CD4-positive, alpha-beta memory T cell (primary cell): ENCODE measurements at regions of chr2 and their contacts with region 1.

Region 1: GRCh38 chr2:147331790-147332419 is 512.9 kb upstream of the ACVR2A start:
- DNase-seq: peak; percentile 48 to 57 (median 54)
- H3K4me3 ChIP-seq: no peak overlapping the region
- H3K4me3 Mint-ChIP-seq: peak overlapping the region in 6 of 8 donors; percentile 6 to 66 (median 42)
- H3K27ac ChIP-seq: no peak overlapping the region
- H3K27ac Mint-ChIP-seq: peak overlapping the region in 5 of 7 donors; percentile 15 to 66 (median 42)
- H3K4me1 ChIP-seq: peaks cover 17% of the 10 kb centered on the region
- H3K4me1 Mint-ChIP-seq: peaks cover 10 to 39% (median 16%) of the 10 kb centered on the region in 4 donors
- H3K27me3 ChIP-seq: no peaks in the 10 kb centered on the region
- H3K27me3 Mint-ChIP-seq: no peaks in the 10 kb centered on the region

Region 2: GRCh38 chr2:147045113-147045512 is 286.8 kb before region 1 on chr2:
- CTCF ChIA-PET with region 1: interaction called, 14 read pairs
- POLR2A ChIA-PET with region 1: no interaction called
- intact Hi-C with region 1: loop called (anchors 1 kb)
- DNase-seq: peak; percentile 8 to 37 (median 33)
- H3K4me3 ChIP-seq: no peak overlapping the region
- H3K4me3 Mint-ChIP-seq: no peak overlapping the region
- H3K27ac ChIP-seq: no peak overlapping the region
- H3K27ac Mint-ChIP-seq: peak overlapping the region in 3 of 7 donors; percentile 4 to 85 (median 74)
- H3K4me1 ChIP-seq: no peaks in the 10 kb centered on the region
- H3K4me1 Mint-ChIP-seq: peaks cover 0 to 5% (median under 1%) of the 10 kb centered on the region in 4 donors
- H3K27me3 ChIP-seq: no peaks in the 10 kb centered on the region
- H3K27me3 Mint-ChIP-seq: no peaks in the 10 kb centered on the region

Region 3: DNA sequence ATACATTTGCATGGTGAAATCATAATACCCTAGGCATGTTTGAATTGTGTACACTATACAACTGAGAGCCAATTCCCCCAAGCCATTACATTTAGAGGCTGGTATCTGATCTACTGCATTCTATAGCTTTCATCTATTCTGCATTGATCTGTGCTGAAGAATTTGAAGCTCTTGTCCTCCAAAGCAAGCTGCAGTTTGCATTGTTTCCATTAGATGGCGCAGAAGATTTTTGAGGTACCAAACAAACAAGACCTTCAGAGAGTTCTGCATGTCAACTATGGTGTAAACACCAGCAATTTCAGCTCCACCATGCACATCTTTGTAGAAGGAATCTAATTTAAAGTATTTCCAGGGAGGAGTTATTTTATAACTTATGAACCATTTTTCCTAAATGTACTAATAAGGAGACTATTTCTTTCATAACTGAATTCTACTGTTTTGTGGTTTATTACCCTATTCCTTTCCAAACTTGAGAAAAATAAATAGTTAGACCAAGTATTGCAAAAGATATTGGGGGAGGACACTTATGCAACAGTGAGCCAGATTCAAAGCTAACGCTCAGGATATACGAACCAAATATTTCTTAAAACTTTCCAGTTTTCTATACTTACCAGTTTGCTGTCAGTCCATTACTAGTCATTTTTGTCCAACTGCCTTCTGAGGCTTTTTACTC is 248.9 kb before region 1 on chr2:
- CTCF ChIA-PET with region 1: interaction called, 57 read pairs
- POLR2A ChIA-PET with region 1: no interaction called
- intact Hi-C with region 1: loop called (anchors 1 kb)
- DNase-seq: peak; percentile 50 to 64 (median 57)
- H3K4me3 ChIP-seq: no peak overlapping the region
- H3K4me3 Mint-ChIP-seq: no peak overlapping the region
- H3K27ac ChIP-seq: no peak overlapping the region
- H3K27ac Mint-ChIP-seq: no peak overlapping the region
- H3K4me1 ChIP-seq: no peaks in the 10 kb centered on the region
- H3K4me1 Mint-ChIP-seq: peaks cover 0 to 4% (median under 1%) of the 10 kb centered on the region in 4 donors
- H3K27me3 ChIP-seq: no peaks in the 10 kb centered on the region
- H3K27me3 Mint-ChIP-seq: no peaks in the 10 kb centered on the region

Region 4: GRCh38 chr2:147288131-147288530 is 43.8 kb before region 1 on chr2:
- CTCF ChIA-PET with region 1: interaction called, 49 read pairs
- POLR2A ChIA-PET with region 1: interaction called, 4 read pairs
- intact Hi-C with region 1: loop called (anchors 1 kb)
- DNase-seq: peak; percentile 55 to 70 (median 67)
- H3K4me3 ChIP-seq: no peak overlapping the region
- H3K4me3 Mint-ChIP-seq: peak overlapping the region in 6 of 8 donors; percentile 3 to 62 (median 28)
- H3K27ac ChIP-seq: no peak overlapping the region
- H3K27ac Mint-ChIP-seq: peak overlapping the region; percentile 5 to 88 (median 44)
- H3K4me1 ChIP-seq: peaks cover 25% of the 10 kb centered on the region
- H3K4me1 Mint-ChIP-seq: peaks cover 19 to 30% (median 23%) of the 10 kb centered on the region in 4 donors
- H3K27me3 ChIP-seq: no peaks in the 10 kb centered on the region
- H3K27me3 Mint-ChIP-seq: no peaks in the 10 kb centered on the region

Region 5: DNA sequence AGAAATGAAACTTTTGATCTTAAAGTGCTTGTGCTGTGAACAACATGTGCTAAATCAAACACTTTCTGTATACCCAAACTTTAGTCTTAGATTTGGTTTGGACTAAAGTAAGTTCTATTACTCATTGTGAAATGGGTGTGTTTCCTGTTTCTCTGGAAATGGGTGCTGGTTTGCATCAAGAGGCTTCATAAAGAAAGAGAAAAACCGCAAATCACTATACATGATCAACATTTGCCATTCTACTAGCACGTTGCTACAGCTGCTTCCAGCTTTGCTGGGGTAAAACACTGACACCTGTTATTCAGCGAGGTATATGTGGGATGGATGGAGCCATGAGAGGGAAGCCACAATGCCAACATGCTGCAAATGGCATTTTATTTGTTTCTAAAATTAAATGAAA is 34.1 kb before region 1 on chr2:
- CTCF ChIA-PET with region 1: interaction called, 49 read pairs
- POLR2A ChIA-PET with region 1: interaction called, 6 read pairs
- intact Hi-C with region 1: no loop called
- DNase-seq: peak; percentile 60 to 67 (median 64)
- H3K4me3 ChIP-seq: no peak overlapping the region
- H3K4me3 Mint-ChIP-seq: peak overlapping the region in 7 of 8 donors; percentile 27 to 79 (median 64)
- H3K27ac ChIP-seq: peak overlapping the region; percentile 25
- H3K27ac Mint-ChIP-seq: peak overlapping the region; percentile 79 to 97 (median 89)
- H3K4me1 ChIP-seq: peaks cover 72% of the 10 kb centered on the region
- H3K4me1 Mint-ChIP-seq: peaks cover 56 to 83% (median 65%) of the 10 kb centered on the region in 4 donors
- H3K27me3 ChIP-seq: no peaks in the 10 kb centered on the region
- H3K27me3 Mint-ChIP-seq: no peaks in the 10 kb centered on the region

Region 6: DNA sequence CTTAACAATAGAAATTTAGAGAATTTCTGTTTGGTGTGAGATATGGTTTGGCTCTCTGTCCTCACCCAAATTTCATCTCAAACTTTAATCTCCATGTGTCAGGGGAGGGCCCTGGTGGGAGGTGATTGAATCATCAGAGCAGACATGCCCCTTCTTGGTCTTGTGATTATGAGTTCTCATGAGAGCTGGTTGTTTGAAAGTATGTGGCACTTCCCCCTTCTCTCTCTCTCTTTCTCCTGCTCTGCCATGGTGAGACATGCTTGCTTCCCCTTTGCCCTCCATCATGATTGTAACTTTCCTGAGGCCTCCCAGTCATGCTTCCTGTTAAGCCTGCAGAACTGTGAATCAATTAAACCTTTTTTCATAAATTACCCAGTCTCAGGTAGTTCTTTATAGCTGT is 11.8 kb before region 1 on chr2:
- CTCF ChIA-PET with region 1: interaction called, 12 read pairs
- POLR2A ChIA-PET with region 1: no interaction called
- intact Hi-C with region 1: no loop called
- DNase-seq: no peak
- H3K4me3 ChIP-seq: no peak overlapping the region
- H3K4me3 Mint-ChIP-seq: no peak overlapping the region
- H3K27ac ChIP-seq: no peak overlapping the region
- H3K27ac Mint-ChIP-seq: no peak overlapping the region
- H3K4me1 ChIP-seq: no peaks in the 10 kb centered on the region
- H3K4me1 Mint-ChIP-seq: no peaks in the 10 kb centered on the region
- H3K27me3 ChIP-seq: no peaks in the 10 kb centered on the region
- H3K27me3 Mint-ChIP-seq: no peaks in the 10 kb centered on the region

Region 7: DNA sequence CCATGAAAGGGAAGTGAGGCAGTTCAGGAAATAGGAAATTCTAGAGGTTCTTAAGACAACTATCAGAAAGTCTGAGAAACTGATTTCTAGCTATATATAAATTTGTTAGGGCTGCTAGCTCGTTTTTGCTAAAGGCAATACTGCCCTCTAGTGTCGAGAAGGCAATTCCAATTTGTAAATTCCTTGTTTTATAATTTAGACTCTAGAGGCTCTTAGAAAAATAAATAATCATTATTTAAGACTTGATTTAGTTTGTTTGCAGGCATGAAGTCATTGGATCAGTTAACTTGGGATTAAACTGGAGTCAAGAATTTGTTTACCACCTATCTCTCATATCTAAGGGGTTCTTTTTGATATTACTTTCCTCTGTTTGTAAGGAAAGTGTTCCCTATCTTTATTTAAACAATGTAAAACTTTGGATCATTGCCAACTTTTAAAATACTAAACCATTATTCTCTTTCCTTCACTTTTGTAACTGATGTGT is 579.1 kb after region 1 on chr2:
- CTCF ChIA-PET with region 1: interaction called, 24 read pairs
- POLR2A ChIA-PET with region 1: no interaction called
- intact Hi-C with region 1: loop called (anchors 1 kb)
- DNase-seq: peak; percentile 48 to 65 (median 57)
- H3K4me3 ChIP-seq: no peak overlapping the region
- H3K4me3 Mint-ChIP-seq: no peak overlapping the region
- H3K27ac ChIP-seq: no peak overlapping the region
- H3K27ac Mint-ChIP-seq: peak overlapping the region in 4 of 7 donors; percentile 17 to 52 (median 36)
- H3K4me1 ChIP-seq: peaks cover 12% of the 10 kb centered on the region
- H3K4me1 Mint-ChIP-seq: peaks cover 11 to 18% (median 14%) of the 10 kb centered on the region in 4 donors
- H3K27me3 ChIP-seq: no peaks in the 10 kb centered on the region
- H3K27me3 Mint-ChIP-seq: no peaks in the 10 kb centered on the region